ENCODE measurements at regions of chr3 and their contacts with region 1.

Region 1: GRCh38 chr3:17841190-17841828 is 98.9 kb upstream of the TBC1D5 start:
- DNase-seq: peak; percentile 49 to 66
- ATAC-seq: peak; percentile 96 to 99
- H3K4me3 ChIP-seq: no peak overlapping the region
- H3K27ac ChIP-seq: 0 out of 6 replicates have a peak overlapping the region, but pooled peaks of 1 of the 2 experiments have one; percentile 20
- H3K4me1 ChIP-seq: no peaks in the 10 kb centered on the region
- CTCF ChIP-seq: peak; percentile 89
- EP300 ChIP-seq: no peak
- POLR2A ChIP-seq: no peak
- RAD21 ChIP-seq: peak; percentile 96

Region 2: GRCh38 chr3:17423786-17424536 is 417.3 kb before region 1 on chr3:
- CTCF ChIA-PET with region 1: interaction called, 17 read pairs
- POLR2A ChIA-PET with region 1: no interaction called
- DNase-seq: no peak
- ATAC-seq: peak in 1 of 2 experiments; percentile 38; a peak in 1 of 6 replicates
- H3K4me3 ChIP-seq: no peak overlapping the region
- H3K27ac ChIP-seq: no peak overlapping the region
- H3K4me1 ChIP-seq: peaks cover 21% of the 10 kb centered on the region
- CTCF ChIP-seq: no peak
- EP300 ChIP-seq: no peak
- POLR2A ChIP-seq: no peak
- RAD21 ChIP-seq: no peak

Region 3: DNA sequence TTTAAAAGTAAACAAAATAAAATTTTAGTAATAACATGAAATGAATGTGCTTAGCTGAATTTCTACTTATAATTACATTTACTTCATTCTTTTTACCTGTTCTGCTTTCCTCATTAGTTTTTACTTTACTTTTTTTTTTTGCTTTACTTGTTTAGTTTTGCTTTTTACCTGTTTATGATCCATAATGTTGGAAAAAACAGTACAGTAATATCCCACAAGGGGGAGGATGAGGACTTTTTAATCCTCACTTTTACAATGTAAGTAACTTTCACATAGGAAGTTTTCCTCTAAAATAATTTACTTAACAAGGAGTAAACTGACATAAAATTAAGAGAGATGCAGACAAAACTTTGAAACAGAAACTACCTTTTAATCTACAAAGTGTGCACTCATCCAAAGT is 367.5 kb before region 1 on chr3:
- CTCF ChIA-PET with region 1: interaction called, 17 read pairs
- POLR2A ChIA-PET with region 1: no interaction called
- DNase-seq: peak in 1 of 2 experiments; percentile 43
- ATAC-seq: no peak
- H3K4me3 ChIP-seq: no peak overlapping the region
- H3K27ac ChIP-seq: peak overlapping the region in 1 of 2 experiments; percentile 9; a peak in 1 of 6 replicates
- H3K4me1 ChIP-seq: peaks cover 35% of the 10 kb centered on the region
- CTCF ChIP-seq: peak; percentile 40; the same call in 2 of the 3 replicates
- EP300 ChIP-seq: no peak
- POLR2A ChIP-seq: no peak
- RAD21 ChIP-seq: peak; percentile 51 to 61

Region 4: GRCh38 chr3:17686613-17687012 is 154.7 kb before region 1 on chr3:
- CTCF ChIA-PET with region 1: interaction called, 11 read pairs
- POLR2A ChIA-PET with region 1: no interaction called
- DNase-seq: peak; percentile 13 to 71
- ATAC-seq: peak; percentile 73 to 93; a peak in 4 of 6 replicates
- H3K4me3 ChIP-seq: no peak overlapping the region
- H3K27ac ChIP-seq: no peak overlapping the region
- H3K4me1 ChIP-seq: 0 out of 3 replicates have a peak, but pooled peaks cover 2% of the 10 kb centered on the region
- CTCF ChIP-seq: peak; percentile 76
- EP300 ChIP-seq: no peak
- POLR2A ChIP-seq: no peak
- RAD21 ChIP-seq: peak; percentile 81 to 83

Region 5: DNA sequence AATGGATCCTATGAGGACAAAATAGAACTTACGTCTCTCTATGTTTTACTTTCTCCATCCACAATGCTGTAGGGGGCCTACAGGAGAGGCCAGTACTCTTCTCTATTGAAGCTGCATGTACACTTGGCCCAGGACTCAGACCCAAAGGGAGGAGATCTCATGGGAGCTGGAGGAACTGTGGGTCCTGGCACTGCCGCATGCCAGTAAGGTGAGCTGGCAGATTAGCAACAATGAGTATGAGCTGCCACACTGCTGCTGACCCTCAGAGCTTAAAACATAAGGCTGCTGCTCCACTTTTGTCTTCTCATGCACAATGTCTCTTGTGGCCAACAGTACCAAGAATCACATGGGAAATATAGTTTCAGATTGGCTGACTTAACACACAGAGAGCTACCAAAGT is 41.1 kb before region 1 on chr3:
- CTCF ChIA-PET with region 1: interaction called, 12 read pairs
- POLR2A ChIA-PET with region 1: no interaction called
- DNase-seq: no peak
- ATAC-seq: peak in 1 of 2 experiments; percentile 35; a peak in 1 of 6 replicates
- H3K4me3 ChIP-seq: no peak overlapping the region
- H3K27ac ChIP-seq: no peak overlapping the region
- H3K4me1 ChIP-seq: no peaks in the 10 kb centered on the region; the same call in 2 of the 3 replicates
- CTCF ChIP-seq: no peak
- EP300 ChIP-seq: no peak
- POLR2A ChIP-seq: no peak
- RAD21 ChIP-seq: no peak

Region 6: DNA sequence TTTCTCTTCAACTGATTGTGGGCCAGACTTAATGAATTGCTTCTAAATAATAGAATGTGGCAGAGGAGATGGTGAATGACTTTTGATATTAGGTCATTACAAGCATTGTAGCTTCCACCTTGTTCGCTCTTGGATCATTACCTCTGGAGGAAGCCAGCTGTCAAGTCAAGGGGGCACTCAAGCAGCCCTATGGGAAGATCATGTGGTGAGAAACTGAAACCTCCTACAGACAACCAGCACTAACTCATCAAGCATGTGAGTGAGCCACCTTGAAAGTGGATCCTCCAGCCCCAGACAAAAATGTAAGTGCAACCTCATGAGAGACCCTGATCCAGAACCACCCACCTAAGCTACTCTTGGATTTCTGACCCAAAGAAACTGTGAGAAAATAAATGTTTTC is 10.9 kb after region 1 on chr3:
- CTCF ChIA-PET with region 1: interaction called, 25 read pairs
- POLR2A ChIA-PET with region 1: no interaction called
- DNase-seq: no peak
- ATAC-seq: no peak
- H3K4me3 ChIP-seq: no peak overlapping the region
- H3K27ac ChIP-seq: no peak overlapping the region
- H3K4me1 ChIP-seq: no peaks in the 10 kb centered on the region
- CTCF ChIP-seq: no peak
- EP300 ChIP-seq: no peak
- POLR2A ChIP-seq: no peak
- RAD21 ChIP-seq: no peak